Heart left ventricle (tissue), 16 donors: ENCODE measurements at regions of chr4 and their contacts with region 1.

Region 1: DNA sequence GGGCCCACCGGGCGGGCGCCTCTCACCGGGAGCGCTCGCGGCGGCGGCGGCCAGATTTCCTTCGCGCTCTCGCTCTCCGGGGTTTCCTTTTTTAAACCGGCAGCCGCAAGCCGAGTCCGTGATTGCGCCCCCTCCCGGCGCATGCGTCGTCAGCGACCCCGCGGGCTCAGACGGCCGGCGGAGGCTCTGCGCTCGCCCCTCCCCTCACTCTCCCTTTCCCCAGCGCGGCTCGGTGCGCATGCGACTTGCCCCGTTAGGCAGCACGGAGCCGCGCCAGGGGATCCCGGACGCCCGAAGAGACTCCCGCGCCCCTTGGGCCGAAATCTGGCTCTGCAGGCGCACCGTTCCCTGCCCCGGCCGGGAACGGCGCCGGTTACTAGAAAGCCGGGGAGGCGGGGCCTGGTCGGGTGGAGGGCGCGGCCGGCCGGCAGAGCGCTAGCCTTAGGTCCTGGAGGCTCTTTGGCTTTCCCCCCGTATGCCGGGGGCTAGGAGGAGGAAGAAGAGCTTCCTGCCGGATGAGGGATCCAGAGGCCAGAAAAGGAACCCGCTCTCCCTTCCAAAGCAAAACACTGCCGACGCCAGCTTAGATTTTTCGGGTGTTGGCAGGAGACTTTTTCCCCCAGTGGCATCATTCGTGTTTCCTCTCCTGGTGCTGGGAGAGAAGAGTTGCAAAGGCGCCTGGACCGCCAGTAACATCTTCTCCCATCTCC is at the start of gene CLOCK:
- DNase-seq: peak; percentile 88 to 95 (median 92)
- ATAC-seq: peak; percentile 76 to 93 (median 92)
- H3K4me3 ChIP-seq: peak within 1 kb of the TSS; percentile 73 to 99 (median 95)
- H3K27ac ChIP-seq: peak within 1 kb of the TSS; percentile 97 to 99 (median 99)
- H3K4me1 ChIP-seq: peaks cover 0 to 31% (median 17%) of the 10 kb centered on the region in 12 donors
- H3K27me3 ChIP-seq: no peaks in the 10 kb centered on the region
- CTCF ChIP-seq: peak; percentile 41 to 81 (median 66)
- POLR2A ChIP-seq: peak in 1 of 2 donors; percentile 75
- total RNA-seq, gene CLOCK: 27.3 to 42.1 (median 33.2) TPM

Region 2: GRCh38 chr4:55395529-55396307 is 151.2 kb before region 1 on chr4 and contains the start of gene TMEM165:
- intact Hi-C with region 1: loop called in 5 of 10 experiments (anchors 5 to 10 kb)
- DNase-seq: peak; percentile 93 to 96 (median 93)
- ATAC-seq: peak; percentile 94 to 98 (median 98)
- H3K4me3 ChIP-seq: peak within 1 kb of the TSS; percentile 63 to 100 (median 94)
- H3K27ac ChIP-seq: peak within 1 kb of the TSS; percentile 96 to 100 (median 98)
- H3K4me1 ChIP-seq: peaks cover 0 to 42% (median 33%) of the 10 kb centered on the region in 12 donors
- H3K27me3 ChIP-seq: no peaks in the 10 kb centered on the region
- CTCF ChIP-seq: peak in 1 of 12 donors; percentile 7
- POLR2A ChIP-seq: peak; percentile 68 to 97
- total RNA-seq, gene TMEM165: 28.2 to 78.3 (median 53.9) TPM

Region 3: DNA sequence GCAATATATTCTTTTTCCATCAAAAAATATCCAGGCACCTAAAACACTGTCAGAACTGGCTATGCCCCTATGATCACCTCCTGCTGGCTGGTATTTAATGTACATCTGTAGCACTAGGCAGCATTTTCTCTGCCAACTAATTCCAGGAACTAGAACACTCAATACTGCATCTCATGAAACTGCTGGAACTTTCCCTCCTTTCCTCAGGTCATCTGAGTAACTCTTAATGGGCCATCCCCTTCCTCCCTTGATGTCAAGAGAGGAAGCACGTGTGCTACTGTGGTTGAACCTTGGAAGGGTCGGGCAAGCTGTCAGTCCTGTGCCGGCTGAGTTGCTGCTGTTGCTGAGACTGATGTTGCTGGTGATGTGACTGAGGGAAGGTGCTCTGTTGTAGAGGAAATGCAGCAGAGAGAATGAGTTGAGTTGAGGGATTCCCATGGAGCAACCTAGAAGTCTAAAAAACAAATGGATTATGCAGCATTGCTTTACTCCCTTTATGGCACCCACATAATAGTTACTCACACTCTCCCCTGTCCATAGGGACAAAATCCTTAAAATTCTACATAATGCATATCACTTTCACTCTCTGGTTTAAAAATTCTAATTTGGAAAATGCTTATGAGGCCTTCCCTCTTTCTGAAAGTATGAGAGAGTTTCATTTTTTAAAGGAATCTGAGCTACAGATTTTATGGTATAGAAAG is 111.6 kb before region 1 on chr4:
- intact Hi-C with region 1: loop called in 3 of 10 experiments (anchors 10 kb)
- DNase-seq: no peak
- ATAC-seq: peak in 2 of 4 donors; percentile 42 to 47
- H3K4me3 ChIP-seq: no peak overlapping the region
- H3K27ac ChIP-seq: peak overlapping the region in 1 of 12 donors; percentile 10
- H3K4me1 ChIP-seq: peaks cover 0 to 6% (median 0%) of the 10 kb centered on the region in 12 donors
- H3K27me3 ChIP-seq: no peaks in the 10 kb centered on the region
- CTCF ChIP-seq: peak in 2 of 12 donors; percentile 12 to 18
- POLR2A ChIP-seq: no peak

Region 4: GRCh38 chr4:55458164-55458563 is 88.7 kb before region 1 on chr4:
- intact Hi-C with region 1: loop called in 2 of 10 experiments (anchors 10 kb)
- DNase-seq: no peak
- ATAC-seq: no peak
- H3K4me3 ChIP-seq: no peak overlapping the region
- H3K27ac ChIP-seq: no peak overlapping the region
- H3K4me1 ChIP-seq: no peaks in the 10 kb centered on the region
- H3K27me3 ChIP-seq: no peaks in the 10 kb centered on the region
- CTCF ChIP-seq: no peak
- POLR2A ChIP-seq: no peak

Region 5: DNA sequence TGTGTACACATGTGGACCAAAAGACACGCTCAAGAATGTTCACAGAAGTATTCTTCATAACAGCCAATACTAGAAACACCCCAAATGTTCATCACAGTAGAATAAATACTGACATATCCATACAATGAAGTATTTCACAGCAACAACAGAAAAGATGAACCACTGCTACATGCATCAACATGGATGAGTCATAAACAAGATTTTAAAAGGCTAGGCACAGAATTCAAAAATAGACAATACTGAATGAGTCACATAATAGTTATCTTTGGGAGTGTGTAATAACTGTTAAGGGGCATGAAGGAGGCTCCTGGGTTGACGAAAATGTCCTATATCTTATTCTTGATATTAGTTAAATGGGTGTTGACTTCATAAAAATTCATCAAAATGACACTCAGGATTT is 43.7 kb before region 1 on chr4:
- intact Hi-C with region 1: no loop called
- DNase-seq: no peak
- ATAC-seq: peak in 1 of 4 donors; percentile 69
- H3K4me3 ChIP-seq: no peak overlapping the region
- H3K27ac ChIP-seq: no peak overlapping the region
- H3K4me1 ChIP-seq: peaks cover 0 to 6% (median 0%) of the 10 kb centered on the region in 12 donors
- H3K27me3 ChIP-seq: no peaks in the 10 kb centered on the region
- CTCF ChIP-seq: no peak
- POLR2A ChIP-seq: no peak

Region 6: DNA sequence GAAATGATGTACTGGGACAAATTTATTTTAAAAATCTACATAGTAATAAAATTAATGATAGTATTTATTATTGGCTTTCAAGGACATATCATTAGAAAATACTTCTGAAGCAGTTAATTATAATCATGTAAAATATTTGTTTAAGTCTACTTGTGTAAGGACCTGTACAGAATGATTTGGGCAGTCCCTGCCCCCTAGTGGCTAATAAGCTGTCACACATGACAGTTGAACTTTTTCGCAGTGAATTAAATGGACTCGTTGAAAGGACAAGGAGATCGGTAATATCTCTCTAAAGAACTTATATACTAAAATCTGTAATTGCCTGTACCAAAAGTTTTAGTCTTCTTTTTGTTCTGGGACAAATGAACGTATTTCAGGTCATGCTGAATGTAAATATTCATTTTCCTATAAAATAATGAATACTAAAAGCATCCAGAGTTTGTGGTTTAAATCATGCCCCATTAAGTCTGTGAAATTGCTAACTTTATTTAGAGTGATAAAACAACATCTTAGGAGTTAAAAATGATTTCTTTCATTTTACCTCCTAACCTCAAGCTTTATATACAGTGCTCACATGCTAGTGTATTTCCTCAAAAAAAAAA is 320.2 kb after region 1 on chr4:
- intact Hi-C with region 1: loop called in 3 of 10 experiments (anchors 5 to 10 kb)
- DNase-seq: no peak
- ATAC-seq: peak; percentile 79 to 91 (median 85)
- H3K4me3 ChIP-seq: peak overlapping the region in 1 of 12 donors; percentile 9
- H3K27ac ChIP-seq: peak overlapping the region in 8 of 12 donors; percentile 22 to 76 (median 58)
- H3K4me1 ChIP-seq: peaks cover 0 to 30% (median 15%) of the 10 kb centered on the region in 12 donors
- H3K27me3 ChIP-seq: no peaks in the 10 kb centered on the region
- CTCF ChIP-seq: peak; percentile 74 to 92 (median 86)
- POLR2A ChIP-seq: no peak